A673 (cell line): ENCODE measurements at regions of chr19 and their contacts with region 1.

Region 1: DNA sequence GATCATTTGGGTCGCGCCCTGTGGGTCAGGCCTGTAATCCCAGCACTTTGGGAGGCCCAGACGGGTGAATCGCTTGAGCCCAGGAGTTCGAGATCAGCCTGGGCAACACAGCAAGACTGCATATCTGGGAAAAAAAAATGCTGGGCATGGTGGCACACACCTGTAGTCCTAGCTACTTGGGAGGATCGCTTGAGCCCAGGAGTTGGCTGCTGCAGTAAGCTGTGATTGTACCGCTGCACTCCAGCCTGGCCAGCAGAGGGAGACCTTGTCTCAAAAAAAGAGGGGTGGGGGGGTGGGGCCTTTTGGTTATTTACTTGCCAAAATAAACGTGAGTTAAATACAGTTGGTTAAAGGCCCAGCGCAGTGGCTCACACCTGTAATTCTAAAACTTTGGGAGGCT is 9.8 kb upstream of the ZNF544 start:
- DNase-seq: peak; percentile 43
- H3K4me3 ChIP-seq: no peak overlapping the region
- H3K27ac ChIP-seq: no peak overlapping the region
- H3K4me1 ChIP-seq: no peaks in the 10 kb centered on the region
- H3K27me3 ChIP-seq: no peaks in the 10 kb centered on the region
- CTCF ChIP-seq: peak; percentile 36; the same call in 1 of the 2 replicates

Region 2: GRCh38 chr19:58182989-58183816 is 35.7 kb before region 1 on chr19 and contains the start of gene ZNF274:
- CTCF ChIA-PET with region 1: no interaction called
- POLR2A ChIA-PET with region 1: interaction called, 10 read pairs
- intact Hi-C with region 1: no loop called
- DNase-seq: peak; percentile 95
- H3K4me3 ChIP-seq: peak within 1 kb of the TSS; percentile 69
- H3K27ac ChIP-seq: peak within 1 kb of the TSS; percentile 98
- H3K4me1 ChIP-seq: no peaks in the 10 kb centered on the region
- H3K27me3 ChIP-seq: no peaks in the 10 kb centered on the region
- CTCF ChIP-seq: no peak
- total RNA-seq, gene ZNF274: 25.0 and 27.4 TPM in 2 replicates

Region 3: GRCh38 chr19:58586133-58586769 is 367.4 kb after region 1 on chr19:
- CTCF ChIA-PET with region 1: no interaction called
- POLR2A ChIA-PET with region 1: no interaction called
- intact Hi-C with region 1: no loop called
- DNase-seq: no peak
- H3K4me3 ChIP-seq: no peak overlapping the region
- H3K27ac ChIP-seq: no peak overlapping the region
- H3K4me1 ChIP-seq: no peaks in the 10 kb centered on the region
- H3K27me3 ChIP-seq: no peaks in the 10 kb centered on the region
- CTCF ChIP-seq: no peak